ENCODE measurements at regions of chr1 and their contacts with region 1.

Region 1: DNA sequence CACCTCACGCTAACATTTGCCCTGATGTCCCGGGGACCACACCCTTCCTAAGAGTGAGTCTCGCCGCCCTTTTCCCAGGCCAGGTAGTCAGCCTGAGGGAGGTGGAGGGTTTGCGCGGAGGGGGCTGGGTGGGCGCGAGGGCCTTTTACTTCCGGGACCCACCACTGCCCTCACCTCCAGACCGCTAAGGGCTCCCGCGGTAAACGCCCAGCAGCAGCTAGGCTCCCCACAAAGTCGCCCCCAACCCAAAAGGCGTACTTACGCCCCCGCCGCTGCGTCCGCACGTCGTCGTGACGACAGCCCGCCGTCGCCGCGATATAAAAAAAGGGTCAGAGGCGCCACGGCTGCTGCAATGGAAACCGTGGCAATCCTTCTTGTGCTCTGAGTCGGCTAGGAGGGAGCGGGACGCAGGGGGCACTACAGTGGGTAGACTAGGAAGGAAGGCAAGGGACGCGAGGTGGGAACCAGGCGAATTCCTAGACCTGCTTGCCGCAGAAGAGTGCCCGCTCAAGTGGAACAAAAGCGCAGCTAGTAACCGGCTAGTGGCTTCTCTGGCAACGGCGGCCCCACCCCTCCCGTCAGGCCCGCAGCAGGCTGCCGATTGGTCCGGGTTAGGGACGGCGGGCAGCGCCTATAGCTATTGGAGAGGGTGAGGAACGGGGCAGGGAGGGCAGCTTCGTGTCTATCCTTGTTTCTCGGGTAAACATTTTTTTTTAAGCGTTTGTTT is at the start of gene ODF2L:
- DNase-seq: peak; percentile 73 to 92 (median 85)
- ATAC-seq: peak; percentile 99 to 100 (median 100)
- H3K4me3 ChIP-seq: peak within 1 kb of the TSS; percentile 93 to 98
- H3K4me3 Mint-ChIP-seq: peak within 1 kb of the TSS; percentile 91 to 98 (median 95)
- H3K27ac ChIP-seq: peak within 1 kb of the TSS; percentile 94
- H3K27ac Mint-ChIP-seq: peak within 1 kb of the TSS; percentile 93 to 97
- H3K4me1 ChIP-seq: peaks cover 7 to 19% of the 10 kb centered on the region in 2 experiments
- H3K4me1 Mint-ChIP-seq: peaks cover 53 to 57% (median 54%) of the 10 kb centered on the region in 3 donors
- H3K27me3 ChIP-seq: no peaks in the 10 kb centered on the region
- H3K27me3 Mint-ChIP-seq: no peaks in the 10 kb centered on the region
- total RNA-seq, gene ODF2L: 52.5 to 83.9 (median 67.9) TPM

Region 2: GRCh38 chr1:86499987-86500593 is 104.2 kb after region 1 on chr1:
- CTCF ChIA-PET with region 1: interaction called, 5 to 11 read pairs
- POLR2A ChIA-PET with region 1: interaction called in 1 of 2 experiments, 7 read pairs
- DNase-seq: peak in 1 of 35 experiments; percentile 59
- ATAC-seq: peak; percentile 41 to 68 (median 52)
- H3K4me3 ChIP-seq: no peak overlapping the region
- H3K4me3 Mint-ChIP-seq: no peak overlapping the region
- H3K27ac ChIP-seq: no peak overlapping the region
- H3K27ac Mint-ChIP-seq: peak overlapping the region in 1 of 2 donors; percentile 1
- H3K4me1 ChIP-seq: peaks cover 0 to 18% of the 10 kb centered on the region in 2 experiments
- H3K4me1 Mint-ChIP-seq: peaks cover 7 to 17% (median 11%) of the 10 kb centered on the region in 3 donors
- H3K27me3 ChIP-seq: peaks cover 0 to 11% of the 10 kb centered on the region in 2 experiments
- H3K27me3 Mint-ChIP-seq: peaks cover 9 to 24% of the 10 kb centered on the region in 2 donors

Region 3: GRCh38 chr1:86913896-86914634 is 518.1 kb after region 1 on chr1 and contains the start of gene SELENOF:
- CTCF ChIA-PET with region 1: no interaction called
- POLR2A ChIA-PET with region 1: interaction called in 1 of 2 experiments, 16 read pairs
- DNase-seq: peak; percentile 97 to 100 (median 99)
- ATAC-seq: peak; percentile 88 to 90 (median 90)
- H3K4me3 ChIP-seq: peak within 1 kb of the TSS; percentile 90 to 100
- H3K4me3 Mint-ChIP-seq: no peak within 1 kb of the TSS
- H3K27ac ChIP-seq: peak within 1 kb of the TSS; percentile 92
- H3K27ac Mint-ChIP-seq: no peak within 1 kb of the TSS
- H3K4me1 ChIP-seq: peaks cover 17 to 22% of the 10 kb centered on the region in 2 experiments
- H3K4me1 Mint-ChIP-seq: peaks cover 5 to 54% (median 52%) of the 10 kb centered on the region in 3 donors
- H3K27me3 ChIP-seq: no peaks in the 10 kb centered on the region
- H3K27me3 Mint-ChIP-seq: no peaks in the 10 kb centered on the region
- total RNA-seq, gene SELENOF: 141 to 165 (median 145) TPM